ENCODE measurements at regions of chr6 and their contacts with region 1.

Region 1: DNA sequence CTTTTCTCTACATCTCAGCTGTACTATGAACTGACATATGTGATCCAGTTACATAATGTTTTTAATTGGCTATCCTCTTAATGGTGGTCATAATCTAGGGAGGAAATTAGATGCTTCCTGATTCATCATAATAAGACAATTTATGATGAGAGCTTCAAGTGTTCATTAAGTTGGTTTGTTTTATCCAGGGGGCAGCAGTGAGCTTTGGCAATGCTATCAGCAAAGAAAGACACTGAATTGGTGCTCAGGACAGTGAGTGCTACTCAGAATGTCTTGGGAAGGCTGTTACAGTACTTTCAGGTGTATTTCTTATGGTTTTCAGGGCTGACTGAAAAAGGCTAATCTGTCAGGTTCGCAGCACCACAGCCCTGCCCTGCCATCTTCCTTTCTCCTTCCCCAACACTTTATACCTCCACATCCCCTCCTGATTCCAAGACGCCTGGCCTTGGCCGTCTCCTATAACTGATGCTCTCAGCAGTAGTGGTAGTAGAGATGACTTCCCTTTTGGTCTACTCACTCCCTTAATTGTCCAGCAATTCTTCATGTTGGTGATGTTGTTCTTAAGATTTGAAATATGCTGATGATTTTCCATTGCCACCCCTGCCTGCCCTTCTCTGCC is 67.0 kb upstream of the TNFAIP3 start:
- DNase-seq: peak; percentile 85
- ATAC-seq: peak; percentile 77
- H3K4me3 Mint-ChIP-seq: no peak overlapping the region
- H3K27ac Mint-ChIP-seq: peak overlapping the region; percentile 88
- H3K4me1 Mint-ChIP-seq: peaks cover 72% of the 10 kb centered on the region
- H3K27me3 Mint-ChIP-seq: no peaks in the 10 kb centered on the region
- CTCF ChIP-seq: peak; percentile 74

Region 2: GRCh38 chr6:137717074-137718073 is 82.7 kb before region 1 on chr6:
- CTCF ChIA-PET with region 1: interaction called, 56 read pairs
- POLR2A ChIA-PET with region 1: interaction called, 6 read pairs
- intact Hi-C with region 1: no loop called
- DNase-seq: peak; percentile 94
- ATAC-seq: peak; percentile 85
- H3K4me3 Mint-ChIP-seq: peak overlapping the region; percentile 13
- H3K27ac Mint-ChIP-seq: peak overlapping the region; percentile 92
- H3K4me1 Mint-ChIP-seq: peaks cover 45% of the 10 kb centered on the region
- H3K27me3 Mint-ChIP-seq: no peaks in the 10 kb centered on the region
- CTCF ChIP-seq: no peak

Region 3: DNA sequence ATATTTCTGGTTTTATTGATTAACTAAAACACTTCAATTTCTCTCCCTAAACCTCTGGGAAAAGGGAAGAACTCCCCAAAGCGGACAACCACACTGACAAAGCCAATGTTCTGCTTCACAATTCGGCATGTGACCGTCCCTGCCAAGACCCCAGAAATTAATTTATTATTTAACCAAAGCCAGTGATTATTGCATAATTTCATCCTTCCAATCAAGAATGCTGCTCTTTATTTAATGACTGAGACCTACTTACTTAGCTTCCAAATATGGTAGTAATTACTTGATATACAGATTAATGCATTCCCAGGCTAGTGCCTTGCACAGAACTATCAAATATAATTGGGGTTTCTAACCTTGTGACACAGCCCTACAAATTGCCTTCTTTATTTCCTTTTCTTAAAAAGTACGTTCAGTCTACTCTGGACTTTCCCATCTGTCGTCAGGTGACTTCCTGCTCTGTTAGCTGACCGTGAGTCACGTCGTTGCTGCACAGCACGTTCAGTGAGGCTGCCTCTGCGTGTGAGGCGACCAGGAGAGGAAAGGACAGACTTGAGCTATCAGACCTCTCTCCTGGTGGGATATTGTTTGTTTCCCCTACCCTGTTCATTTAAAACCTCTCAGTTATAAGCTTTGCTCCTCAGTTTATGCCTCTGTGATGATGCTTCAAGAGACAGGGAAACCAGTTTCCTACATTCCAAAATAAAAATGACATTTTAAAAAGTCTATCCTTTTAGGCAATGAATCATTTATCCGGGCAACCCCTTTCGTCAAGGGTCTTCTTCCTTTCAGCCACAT is 11.3 kb after region 1 on chr6:
- CTCF ChIA-PET with region 1: interaction called, 49 read pairs
- POLR2A ChIA-PET with region 1: interaction called, 5 read pairs
- intact Hi-C with region 1: no loop called
- DNase-seq: peak; percentile 93
- ATAC-seq: peak; percentile 89
- H3K4me3 Mint-ChIP-seq: peak overlapping the region; percentile 60
- H3K27ac Mint-ChIP-seq: peak overlapping the region; percentile 86
- H3K4me1 Mint-ChIP-seq: peaks cover 70% of the 10 kb centered on the region
- H3K27me3 Mint-ChIP-seq: no peaks in the 10 kb centered on the region
- CTCF ChIP-seq: no peak

Region 4: DNA sequence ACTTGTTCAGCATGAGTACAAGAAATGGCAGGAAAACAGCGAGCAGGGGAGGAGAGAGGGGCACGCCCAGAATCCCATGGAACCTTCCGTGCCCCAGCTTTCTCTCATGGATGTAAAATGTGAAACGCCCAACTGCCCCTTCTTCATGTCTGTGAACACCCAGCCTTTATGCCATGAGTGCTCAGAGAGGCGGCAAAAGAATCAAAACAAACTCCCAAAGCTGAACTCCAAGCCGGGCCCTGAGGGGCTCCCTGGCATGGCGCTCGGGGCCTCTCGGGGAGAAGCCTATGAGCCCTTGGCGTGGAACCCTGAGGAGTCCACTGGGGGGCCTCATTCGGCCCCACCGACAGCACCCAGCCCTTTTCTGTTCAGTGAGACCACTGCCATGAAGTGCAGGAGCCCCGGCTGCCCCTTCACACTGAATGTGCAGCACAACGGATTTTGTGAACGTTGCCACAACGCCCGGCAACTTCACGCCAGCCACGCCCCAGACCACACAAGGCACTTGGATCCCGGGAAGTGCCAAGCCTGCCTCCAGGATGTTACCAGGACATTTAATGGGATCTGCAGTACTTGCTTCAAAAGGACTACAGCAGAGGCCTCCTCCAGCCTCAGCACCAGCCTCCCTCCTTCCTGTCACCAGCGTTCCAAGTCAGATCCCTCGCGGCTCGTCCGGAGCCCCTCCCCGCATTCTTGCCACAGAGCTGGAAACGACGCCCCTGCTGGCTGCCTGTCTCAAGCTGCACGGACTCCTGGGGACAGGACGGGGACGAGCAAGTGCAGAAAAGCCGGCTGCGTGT is 78.6 kb after region 1 on chr6:
- CTCF ChIA-PET with region 1: interaction called, 221 read pairs
- POLR2A ChIA-PET with region 1: no interaction called
- intact Hi-C with region 1: no loop called
- DNase-seq: no peak
- ATAC-seq: no peak
- H3K4me3 Mint-ChIP-seq: peak overlapping the region; percentile 98
- H3K27ac Mint-ChIP-seq: peak overlapping the region; percentile 95
- H3K4me1 Mint-ChIP-seq: peaks cover 90% of the 10 kb centered on the region
- H3K27me3 Mint-ChIP-seq: no peaks in the 10 kb centered on the region
- CTCF ChIP-seq: no peak

Region 5: DNA sequence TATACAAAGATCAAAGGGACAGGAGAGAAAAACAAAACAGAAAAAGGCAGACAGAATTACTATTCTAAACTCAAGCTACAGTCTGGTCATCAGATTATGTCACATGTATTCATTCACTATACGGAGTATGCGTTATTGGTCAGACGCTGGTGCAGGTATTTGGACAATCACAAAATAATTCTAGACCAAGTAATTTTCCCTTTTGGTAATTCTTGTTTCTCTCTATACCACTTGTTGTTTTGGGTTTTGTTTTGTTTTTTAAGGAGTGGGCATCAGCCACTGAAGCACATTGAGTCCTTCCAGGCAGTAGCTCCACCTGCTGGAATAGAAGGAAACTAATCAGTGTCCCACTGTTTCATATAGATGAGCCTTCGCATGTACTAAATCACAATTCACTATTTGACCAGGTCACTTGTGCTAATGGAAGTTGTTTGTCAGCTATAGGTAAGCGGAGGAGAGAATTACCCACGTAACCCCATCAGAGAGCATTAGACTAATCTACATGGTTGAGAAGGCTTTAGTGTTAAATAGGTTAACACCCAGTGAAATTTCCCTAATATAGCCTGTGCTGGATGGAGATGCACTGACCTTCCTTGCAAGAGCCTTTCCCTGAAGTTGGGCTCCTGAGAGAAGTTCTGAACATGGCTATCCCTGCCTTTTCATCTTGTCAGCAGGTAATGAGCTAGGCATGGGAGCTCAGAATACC is 144.9 kb after region 1 on chr6:
- CTCF ChIA-PET with region 1: interaction called, 18 read pairs
- POLR2A ChIA-PET with region 1: interaction called, 5 read pairs
- intact Hi-C with region 1: loop called (anchors 10 kb)
- DNase-seq: no peak
- ATAC-seq: peak; percentile 31
- H3K4me3 Mint-ChIP-seq: no peak overlapping the region
- H3K27ac Mint-ChIP-seq: peak overlapping the region; percentile 4
- H3K4me1 Mint-ChIP-seq: peaks cover 53% of the 10 kb centered on the region
- H3K27me3 Mint-ChIP-seq: no peaks in the 10 kb centered on the region
- CTCF ChIP-seq: peak; percentile 79

Measured in activated CD8-positive, alpha-beta T cell treated with anti-CD3 and anti-CD28 coated beads for 36 hours (primary cell).